ENCODE measurements at regions of chr16 and their contacts with region 1.

Region 1: GRCh38 chr16:85055503-85056210 is 28.1 kb downstream of the KIAA0513 start:
- DNase-seq: peak; percentile 29 to 90 (median 70)
- ATAC-seq: peak; percentile 96
- H3K4me3 ChIP-seq: peak overlapping the region; percentile 19
- H3K4me3 Mint-ChIP-seq: peak overlapping the region; percentile 76 to 90 (median 84)
- H3K27ac ChIP-seq: peak overlapping the region; percentile 72
- H3K27ac Mint-ChIP-seq: peak overlapping the region; percentile 91 to 99 (median 96)
- H3K4me1 ChIP-seq: peaks cover 25 to 37% of the 10 kb centered on the region in 2 donors
- H3K4me1 Mint-ChIP-seq: peaks cover 32 to 58% (median 37%) of the 10 kb centered on the region in 7 donors
- H3K27me3 ChIP-seq: no peaks in the 10 kb centered on the region
- H3K27me3 Mint-ChIP-seq: no peaks in the 10 kb centered on the region

Region 2: DNA sequence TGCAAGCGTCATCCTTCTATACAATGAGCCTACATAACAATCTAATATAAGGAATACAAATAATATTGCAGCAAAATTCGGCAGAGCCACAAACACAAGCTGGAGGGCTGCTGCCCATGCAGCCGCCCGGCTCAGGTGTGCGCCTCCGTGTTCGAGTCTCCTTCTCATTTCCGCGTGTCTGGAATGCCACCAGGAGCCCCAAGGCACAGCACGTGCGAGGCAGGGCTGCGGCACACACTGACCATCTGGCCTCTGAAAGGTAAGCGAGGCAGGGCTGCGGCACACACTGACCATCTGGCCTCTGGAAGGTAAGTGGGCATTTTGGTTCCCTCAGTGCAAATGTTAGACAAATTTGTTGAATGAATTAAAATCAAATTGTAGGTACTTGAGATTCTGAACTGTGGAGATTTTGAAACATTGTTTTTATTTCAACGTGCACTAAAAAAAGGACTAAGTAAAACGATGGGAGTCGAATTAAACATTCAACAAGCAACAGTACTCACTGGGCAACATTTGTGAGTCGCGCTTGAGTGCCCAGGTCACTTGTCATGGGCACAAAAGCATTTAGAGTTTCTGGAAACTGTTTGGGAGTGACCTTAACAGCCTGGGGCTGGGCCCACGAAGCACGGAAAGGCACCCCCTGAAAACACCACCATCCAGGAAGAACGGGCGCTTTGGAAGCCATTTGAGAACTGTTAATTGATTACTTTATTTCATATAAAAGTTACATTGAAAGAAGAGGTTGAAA is 81.7 kb before region 1 on chr16:
- CTCF ChIA-PET with region 1: no interaction called
- POLR2A ChIA-PET with region 1: no interaction called
- intact Hi-C with region 1: no loop called
- DNase-seq: no peak
- ATAC-seq: no peak
- H3K4me3 ChIP-seq: no peak overlapping the region
- H3K4me3 Mint-ChIP-seq: no peak overlapping the region
- H3K27ac ChIP-seq: no peak overlapping the region
- H3K27ac Mint-ChIP-seq: no peak overlapping the region
- H3K4me1 ChIP-seq: peaks cover 0 to 6% of the 10 kb centered on the region in 2 donors
- H3K4me1 Mint-ChIP-seq: peaks cover 0 to 8% (median 4%) of the 10 kb centered on the region in 7 donors
- H3K27me3 ChIP-seq: no peaks in the 10 kb centered on the region
- H3K27me3 Mint-ChIP-seq: no peaks in the 10 kb centered on the region

Region 3: DNA sequence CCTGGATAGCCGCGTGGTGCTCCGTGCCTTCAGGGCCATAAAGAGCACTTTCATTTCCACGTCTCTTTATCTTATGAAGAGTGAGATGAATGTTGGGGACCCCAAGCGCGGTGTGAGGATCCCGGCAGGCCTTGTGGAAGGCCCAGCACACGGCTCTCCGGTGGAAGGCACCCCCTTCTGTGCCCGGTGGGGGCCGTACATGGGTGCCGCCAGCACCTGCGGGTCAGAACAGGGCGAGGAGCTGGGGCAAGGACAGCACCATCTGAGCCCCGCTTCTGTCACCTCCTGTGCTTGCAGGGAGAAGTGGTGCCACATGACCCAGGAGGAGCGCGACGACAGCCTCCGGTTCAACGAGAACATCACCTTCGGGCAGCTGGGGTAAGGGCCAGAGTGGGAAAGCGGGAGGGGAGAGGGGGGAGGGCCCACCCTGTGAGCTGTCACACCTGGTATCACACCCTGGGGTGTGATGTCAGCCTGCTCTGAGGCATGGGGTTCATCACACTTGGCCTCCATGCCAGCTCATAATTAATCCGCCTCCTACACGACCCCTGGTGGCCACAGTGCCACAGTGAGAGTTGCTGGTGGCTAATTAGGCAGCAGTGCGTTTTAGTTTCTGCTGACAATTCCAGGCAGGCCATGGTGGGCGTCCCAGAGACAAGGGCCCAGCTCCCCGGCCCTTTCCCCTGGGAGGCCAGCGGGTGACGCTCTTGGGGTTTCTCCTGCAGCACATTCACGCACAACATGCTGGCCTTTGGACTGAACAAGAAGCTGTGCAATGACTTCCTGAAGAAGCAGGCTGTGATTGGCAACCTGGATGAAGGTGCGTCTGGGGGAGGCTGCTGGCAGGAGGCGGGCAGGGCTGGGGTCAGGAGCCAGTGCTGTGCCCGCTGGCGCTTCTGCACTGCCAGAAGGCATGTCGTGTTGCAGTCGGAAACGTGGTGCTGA is 31.0 kb after region 1 on chr16:
- CTCF ChIA-PET with region 1: interaction called, 18 read pairs
- POLR2A ChIA-PET with region 1: interaction called, 9 read pairs
- intact Hi-C with region 1: loop called (anchors 1 kb)
- DNase-seq: peak; percentile 44 to 78 (median 74)
- ATAC-seq: peak; percentile 88
- H3K4me3 ChIP-seq: no peak overlapping the region
- H3K4me3 Mint-ChIP-seq: no peak overlapping the region
- H3K27ac ChIP-seq: no peak overlapping the region
- H3K27ac Mint-ChIP-seq: peak overlapping the region in 3 of 9 donors; percentile 23 to 59 (median 43)
- H3K4me1 ChIP-seq: no peaks in the 10 kb centered on the region
- H3K4me1 Mint-ChIP-seq: peaks cover 6 to 31% (median 15%) of the 10 kb centered on the region in 7 donors
- H3K27me3 ChIP-seq: no peaks in the 10 kb centered on the region
- H3K27me3 Mint-ChIP-seq: peaks cover 0 to 2% (median 0%) of the 10 kb centered on the region in 5 donors